ENCODE measurements at regions of chr14 and their contacts with region 1.

Region 1: GRCh38 chr14:22910916-22911315 is 8.0 kb downstream of the RBM23 start:
- DNase-seq: no peak
- H3K4me3 ChIP-seq: no peak overlapping the region
- H3K27ac ChIP-seq: no peak overlapping the region
- H3K4me1 ChIP-seq: peaks cover 2 to 40% (median 34%) of the 10 kb centered on the region in 4 donors
- H3K27me3 ChIP-seq: no peaks in the 10 kb centered on the region
- CTCF ChIP-seq: no peak
- EP300 ChIP-seq: no peak
- POLR2A ChIP-seq: no peak

Region 2: DNA sequence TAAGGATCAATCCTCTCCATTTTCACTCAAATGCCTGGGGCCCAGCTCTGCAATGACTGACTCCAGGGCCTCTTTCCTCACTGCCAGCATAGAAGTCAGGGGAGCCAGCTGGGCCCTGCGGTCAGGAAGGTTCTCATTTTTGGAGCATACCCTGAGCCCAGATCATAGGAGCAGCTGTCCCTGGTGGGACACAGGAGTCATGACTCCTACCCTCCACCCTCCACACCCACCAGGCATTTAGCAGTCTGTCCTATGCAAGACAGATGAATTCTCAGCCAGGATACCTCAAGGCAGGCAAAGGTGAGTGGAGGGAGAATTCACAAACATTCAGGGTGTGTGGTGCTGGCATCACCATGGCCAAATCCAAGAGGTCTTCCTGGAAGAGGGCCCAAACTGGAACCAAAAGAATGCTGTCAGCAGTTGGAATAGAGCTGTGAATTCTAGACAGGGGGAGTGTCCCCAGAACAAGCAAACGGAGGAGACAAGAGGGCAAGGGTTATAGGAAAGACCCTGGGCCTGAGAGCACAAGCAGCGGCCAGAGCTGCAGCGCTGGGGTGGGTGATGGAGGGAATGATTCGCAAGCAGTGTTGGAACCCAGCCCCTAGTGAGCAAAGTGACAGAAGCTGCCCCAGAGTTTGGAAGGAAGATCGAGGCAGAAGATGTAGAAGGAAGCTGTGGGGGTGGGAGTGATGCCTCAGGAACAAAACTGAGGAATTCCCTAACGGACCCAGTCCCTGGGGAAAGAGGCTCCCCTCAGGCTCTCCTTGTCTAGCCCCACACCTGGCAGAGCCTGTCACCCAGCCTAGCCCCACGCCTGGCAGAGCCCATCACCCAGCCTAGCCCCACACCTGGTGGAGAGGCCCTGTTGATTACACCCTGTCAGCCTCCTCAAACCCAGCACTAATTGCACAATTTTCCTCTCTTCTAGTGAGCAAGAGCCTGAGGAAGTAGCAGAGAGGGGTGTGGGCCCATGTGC is 32.4 kb before region 1 on chr14:
- intact Hi-C with region 1: loop called (anchors 5 kb)
- DNase-seq: no peak
- H3K4me3 ChIP-seq: no peak overlapping the region
- H3K27ac ChIP-seq: no peak overlapping the region
- H3K4me1 ChIP-seq: peaks cover 12 to 45% (median 43%) of the 10 kb centered on the region in 4 donors
- H3K27me3 ChIP-seq: peaks cover 0 to 5% (median 0%) of the 10 kb centered on the region in 4 donors
- CTCF ChIP-seq: no peak
- EP300 ChIP-seq: no peak
- POLR2A ChIP-seq: no peak

Region 3: DNA sequence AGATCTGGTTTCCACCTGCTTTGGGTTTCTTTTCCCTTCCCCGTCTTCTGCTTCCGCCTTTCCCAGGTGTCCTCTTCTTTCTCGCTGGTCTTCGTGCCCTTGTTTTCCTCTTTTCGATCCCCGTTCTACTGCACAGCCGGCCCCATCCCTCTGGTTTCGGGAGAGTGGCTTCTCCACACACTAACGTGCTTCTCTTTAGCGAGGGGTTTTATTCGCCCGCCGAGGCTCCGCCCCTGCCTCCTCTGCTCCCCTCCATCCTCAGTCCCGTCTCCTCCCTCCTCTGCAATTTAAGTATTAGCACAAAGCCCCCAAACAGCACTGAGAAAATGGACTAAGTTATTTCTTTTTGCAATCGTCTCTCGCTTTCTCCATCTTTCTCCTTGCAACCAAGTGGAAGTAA is 272.6 kb after region 1 on chr14 and contains the start of gene SLC7A8:
- intact Hi-C with region 1: no loop called
- DNase-seq: no peak
- H3K4me3 ChIP-seq: peak within 1 kb of the TSS; percentile 54 to 69 (median 58)
- H3K27ac ChIP-seq: peak within 1 kb of the TSS; percentile 63 to 75 (median 70)
- H3K4me1 ChIP-seq: peaks cover 0 to 45% (median 43%) of the 10 kb centered on the region in 4 donors
- H3K27me3 ChIP-seq: no peaks in the 10 kb centered on the region
- CTCF ChIP-seq: no peak
- EP300 ChIP-seq: no peak
- POLR2A ChIP-seq: peak; percentile 57
- total RNA-seq, gene SLC7A8: 19.5 to 48.3 (median 32.5) TPM

Measured in esophagus muscularis mucosa (tissue), 4 donors.